PC-3 (cell line): ENCODE measurements at regions of chr19 and their contacts with region 1.

Region 1: GRCh38 chr19:17938092-17938845 is 5.5 kb downstream of the CCDC124 start:
- DNase-seq: peak; percentile 94
- ATAC-seq: peak; percentile 92
- H3K4me3 ChIP-seq: no peak overlapping the region
- H3K27ac ChIP-seq: 0 out of 2 replicates have a peak overlapping the region, but pooled peaks have one; percentile 22
- H3K4me1 ChIP-seq: peaks cover 13% of the 10 kb centered on the region
- H3K27me3 ChIP-seq: no peaks in the 10 kb centered on the region
- CTCF ChIP-seq: peak; percentile 89

Region 2: DNA sequence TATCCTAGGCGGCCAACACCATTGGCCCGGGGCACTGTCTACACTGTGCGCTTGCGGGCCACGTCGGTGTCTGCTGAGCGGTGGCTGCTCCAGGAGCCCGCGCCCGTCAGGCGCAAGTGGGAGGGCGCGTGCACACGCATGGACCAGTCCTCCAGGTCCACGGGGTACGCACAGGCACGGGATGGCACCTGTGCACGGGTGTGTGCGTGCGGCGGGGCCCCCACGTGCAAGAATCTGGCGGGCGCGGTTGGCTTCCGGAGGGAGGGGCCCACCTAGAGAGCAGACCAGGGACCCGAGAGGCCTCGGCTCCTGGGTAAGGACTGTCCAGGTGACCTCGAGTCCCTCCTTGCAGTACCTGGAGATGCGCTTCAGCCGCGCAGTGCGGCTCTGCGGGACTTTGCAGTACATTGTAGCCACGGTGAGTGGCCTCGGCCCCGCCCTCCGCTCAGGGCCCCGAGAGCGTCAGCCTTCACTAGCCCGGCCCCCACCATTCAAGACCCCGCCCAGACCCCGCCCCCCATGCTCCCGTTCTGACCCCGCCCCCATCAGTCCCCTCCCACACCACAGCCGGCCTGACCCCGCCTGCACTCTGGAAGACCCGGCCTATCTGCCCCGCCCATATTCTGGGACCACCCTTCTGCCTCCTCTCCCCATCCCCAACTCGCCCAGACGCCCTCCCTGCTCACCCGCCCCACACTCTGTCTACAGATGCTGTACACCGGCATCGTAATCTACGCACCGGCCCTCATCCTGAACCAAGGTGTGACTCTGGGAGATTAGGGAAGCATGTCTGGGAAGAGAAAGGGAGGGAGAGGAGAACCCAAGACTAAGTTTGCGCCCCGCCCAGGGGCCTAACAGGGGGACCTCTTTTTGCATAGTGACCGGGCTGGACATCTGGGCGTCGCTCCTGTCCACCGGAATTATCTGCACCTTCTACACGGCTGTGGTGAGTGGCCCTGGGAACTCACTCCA is 64.2 kb before region 1 on chr19:
- CTCF ChIA-PET with region 1: interaction called, 105 read pairs
- POLR2A ChIA-PET with region 1: interaction called, 3 read pairs
- intact Hi-C with region 1: no loop called
- DNase-seq: peak; percentile 60
- ATAC-seq: peak; percentile 56
- H3K4me3 ChIP-seq: peak overlapping the region; percentile 65
- H3K27ac ChIP-seq: no peak overlapping the region
- H3K4me1 ChIP-seq: peaks cover 5% of the 10 kb centered on the region; the same call in 1 of the 2 replicates
- H3K27me3 ChIP-seq: 0 out of 2 replicates have a peak, but pooled peaks cover 12% of the 10 kb centered on the region
- CTCF ChIP-seq: no peak

Region 3: GRCh38 chr19:17996826-17997316 is 58.6 kb after region 1 on chr19:
- CTCF ChIA-PET with region 1: interaction called, 18 read pairs
- POLR2A ChIA-PET with region 1: interaction called, 3 read pairs
- intact Hi-C with region 1: loop called (anchors 1 kb)
- DNase-seq: peak; percentile 90
- ATAC-seq: peak; percentile 60
- H3K4me3 ChIP-seq: peak overlapping the region; percentile 48; the same call in 1 of the 2 replicates
- H3K27ac ChIP-seq: no peak overlapping the region
- H3K4me1 ChIP-seq: peaks cover 15% of the 10 kb centered on the region
- H3K27me3 ChIP-seq: no peaks in the 10 kb centered on the region
- CTCF ChIP-seq: peak; percentile 93

Region 4: DNA sequence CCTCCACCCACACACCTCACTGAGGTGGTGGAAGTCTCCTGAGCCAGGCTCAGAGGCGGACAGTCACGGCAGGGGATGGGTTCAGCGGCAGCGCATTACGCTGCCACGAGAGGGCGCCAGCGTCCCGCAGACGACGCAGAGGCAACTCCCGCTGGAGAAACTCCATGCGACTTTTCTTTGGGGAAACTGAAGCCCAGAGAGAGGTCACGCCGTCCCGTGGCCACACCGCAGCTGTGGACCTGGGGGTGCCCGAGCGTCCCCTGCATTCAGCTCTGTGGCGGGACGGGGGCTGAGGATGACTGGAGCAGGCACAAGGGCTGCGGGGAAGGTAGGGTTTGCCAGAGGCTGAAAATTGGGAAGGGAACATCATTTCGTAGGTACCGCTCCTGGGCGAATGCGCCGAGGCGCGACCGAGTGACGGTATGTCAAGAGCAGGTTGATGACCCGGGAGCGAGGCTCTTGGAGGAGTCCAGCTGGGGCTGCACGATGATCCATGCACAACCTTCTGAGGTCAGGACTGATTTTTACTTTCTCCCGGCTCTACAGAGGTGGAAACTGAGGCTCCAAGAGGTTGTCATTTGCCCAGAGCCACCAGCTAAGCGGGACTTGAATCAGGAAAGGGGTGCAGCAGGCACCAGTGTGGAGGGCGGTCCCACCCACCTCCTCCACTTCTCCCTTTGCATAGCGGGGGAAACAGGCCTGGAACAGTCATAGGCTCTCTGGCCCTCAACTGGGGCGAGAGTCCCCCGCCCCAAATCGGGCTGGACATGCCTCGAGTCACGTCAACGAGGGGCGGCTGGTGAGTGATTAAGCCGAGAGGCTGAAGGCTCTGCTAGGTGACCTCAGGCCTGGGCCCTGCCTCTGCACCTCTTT is 69.0 kb after region 1 on chr19:
- CTCF ChIA-PET with region 1: no interaction called
- POLR2A ChIA-PET with region 1: interaction called, 13 read pairs
- intact Hi-C with region 1: no loop called
- DNase-seq: peak; percentile 92
- ATAC-seq: peak; percentile 81
- H3K4me3 ChIP-seq: peak overlapping the region; percentile 65
- H3K27ac ChIP-seq: no peak overlapping the region; the same call in 1 of the 2 replicates
- H3K4me1 ChIP-seq: peaks cover 26% of the 10 kb centered on the region
- H3K27me3 ChIP-seq: no peaks in the 10 kb centered on the region
- CTCF ChIP-seq: peak; percentile 97

Region 5: GRCh38 chr19:18041054-18041453 is 102.8 kb after region 1 on chr19:
- CTCF ChIA-PET with region 1: no interaction called
- POLR2A ChIA-PET with region 1: no interaction called
- intact Hi-C with region 1: no loop called
- DNase-seq: no peak
- ATAC-seq: no peak
- H3K4me3 ChIP-seq: no peak overlapping the region
- H3K27ac ChIP-seq: no peak overlapping the region
- H3K4me1 ChIP-seq: peaks cover 15% of the 10 kb centered on the region
- H3K27me3 ChIP-seq: no peaks in the 10 kb centered on the region
- CTCF ChIP-seq: no peak